ENCODE measurements at regions of chr12 and their contacts with region 1.

Region 1: DNA sequence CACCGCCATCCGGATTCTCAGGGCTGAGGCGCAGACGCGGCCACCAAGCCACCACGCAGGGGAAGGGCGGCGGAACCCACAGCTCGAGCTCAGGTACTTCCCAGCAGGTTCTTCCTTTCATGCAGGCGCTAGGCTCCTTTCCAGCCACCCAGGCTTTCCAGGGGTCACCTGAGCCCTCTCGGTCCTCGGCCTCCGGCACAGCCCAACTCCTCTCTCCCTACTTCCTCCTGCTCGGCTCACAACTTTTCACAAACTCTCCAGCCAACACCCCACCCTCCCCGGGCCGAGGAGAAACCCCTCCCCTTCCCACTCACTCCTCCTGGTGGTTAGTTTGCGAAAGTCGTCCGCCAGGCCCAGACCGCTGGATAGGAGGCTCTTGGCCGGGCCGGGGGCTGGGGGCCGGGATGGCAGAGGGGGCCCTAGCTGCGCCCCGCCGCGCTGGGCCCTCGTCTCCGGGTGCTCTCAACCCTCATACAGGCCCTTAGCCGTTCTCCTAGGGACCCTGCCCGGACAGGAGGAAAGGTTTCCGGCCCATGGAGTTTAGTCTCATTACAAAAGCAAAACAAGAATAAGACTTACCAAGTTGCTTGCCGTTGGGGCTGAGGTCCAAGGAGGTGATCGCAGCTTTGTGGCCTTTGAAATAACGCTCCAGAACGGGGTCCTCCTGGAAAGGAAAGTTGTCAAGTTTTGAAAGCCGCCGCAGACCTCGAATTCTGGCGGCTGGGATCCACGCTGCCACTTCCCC is at the start of gene GALNT4:
- DNase-seq: peak; percentile 92
- ATAC-seq: peak; percentile 95 to 97
- H3K4me3 ChIP-seq: peak within 1 kb of the TSS; percentile 96
- H3K27ac ChIP-seq: peak within 1 kb of the TSS; percentile 91
- H3K4me1 ChIP-seq: peaks cover 51% of the 10 kb centered on the region
- H3K27me3 ChIP-seq: no peaks in the 10 kb centered on the region
- CTCF ChIP-seq: peak; percentile 70
- total RNA-seq, gene GALNT4: 9.6 TPM

Region 2: DNA sequence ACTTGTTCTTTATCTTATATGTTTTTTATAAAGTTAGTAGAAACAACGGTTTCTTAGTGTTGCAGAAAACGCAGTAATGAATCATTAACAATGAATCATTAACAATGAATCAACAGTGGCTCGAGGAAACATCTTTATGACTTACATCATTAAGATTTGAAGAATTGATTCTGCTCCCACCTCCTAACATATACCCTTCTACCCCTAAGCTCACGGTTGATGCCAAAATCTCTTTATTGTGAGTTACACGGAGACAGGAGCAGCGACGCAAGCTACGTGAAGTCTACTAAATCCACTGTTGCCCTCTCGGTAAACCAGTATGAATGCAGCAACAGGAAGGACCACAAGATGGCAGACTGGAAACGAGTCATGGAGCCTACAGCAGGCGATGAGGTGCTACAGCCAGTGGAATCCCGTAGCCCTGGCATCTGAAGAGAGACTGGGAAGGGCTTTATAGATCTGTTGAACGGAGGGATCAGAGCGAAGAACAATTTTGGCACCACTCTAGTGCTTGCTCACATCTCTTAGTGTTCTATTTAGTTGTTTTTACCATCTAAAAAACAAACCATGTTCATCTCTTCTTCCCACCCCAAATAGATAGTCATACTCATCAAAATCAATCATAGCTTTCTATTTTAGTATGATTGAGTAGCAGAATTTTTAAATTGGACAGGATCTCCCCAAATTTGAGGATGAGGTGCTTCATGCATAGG is 505.1 kb before region 1 on chr12:
- intact Hi-C with region 1: loop called (anchors 5 kb)
- DNase-seq: peak; percentile 59
- ATAC-seq: peak; percentile 95 to 96
- H3K4me3 ChIP-seq: peak overlapping the region; percentile 32
- H3K27ac ChIP-seq: no peak overlapping the region
- H3K4me1 ChIP-seq: peaks cover 14% of the 10 kb centered on the region
- H3K27me3 ChIP-seq: no peaks in the 10 kb centered on the region
- CTCF ChIP-seq: peak; percentile 86

Region 3: DNA sequence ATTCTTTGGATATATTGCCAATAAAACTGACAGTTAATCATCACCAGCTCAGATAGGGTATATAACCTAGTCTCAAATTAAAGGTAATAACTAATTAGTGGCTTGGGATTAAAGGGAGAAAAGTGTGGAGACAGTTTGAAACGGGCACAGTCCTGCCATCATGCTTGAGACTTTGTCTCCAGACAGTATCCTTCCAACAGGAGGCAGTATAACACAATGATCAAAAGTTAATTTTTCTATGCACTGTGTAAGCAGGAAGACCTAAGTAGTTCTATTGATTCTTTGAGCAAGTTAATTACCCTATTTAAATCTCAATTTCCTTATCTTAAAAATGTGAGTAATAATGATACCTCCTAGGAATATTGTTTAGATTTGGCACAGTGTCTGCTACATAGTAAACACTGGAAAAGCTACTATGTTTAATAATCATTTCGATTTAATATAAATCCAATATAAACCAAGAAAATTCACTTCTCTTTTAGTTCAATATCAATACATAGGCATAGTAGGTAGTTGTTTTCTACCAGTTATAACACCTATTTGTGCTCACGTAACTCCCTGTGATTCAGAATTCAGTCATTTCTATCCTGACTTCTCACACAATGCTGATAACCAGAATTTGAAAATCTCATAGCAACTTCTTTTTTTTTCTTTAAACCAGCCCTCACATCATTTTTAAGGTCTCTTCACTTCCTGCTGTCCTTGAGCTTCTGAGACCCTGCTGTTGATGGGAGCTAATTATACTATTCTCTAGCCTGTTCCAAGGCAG is 53.8 kb before region 1 on chr12:
- intact Hi-C with region 1: loop called (anchors 10 kb)
- DNase-seq: no peak
- ATAC-seq: peak; percentile 81 to 86
- H3K4me3 ChIP-seq: no peak overlapping the region
- H3K27ac ChIP-seq: no peak overlapping the region
- H3K4me1 ChIP-seq: peaks cover 7% of the 10 kb centered on the region
- H3K27me3 ChIP-seq: no peaks in the 10 kb centered on the region
- CTCF ChIP-seq: peak; percentile 70